ENCODE measurements at regions of chr3 and their contacts with region 1.

Region 1: DNA sequence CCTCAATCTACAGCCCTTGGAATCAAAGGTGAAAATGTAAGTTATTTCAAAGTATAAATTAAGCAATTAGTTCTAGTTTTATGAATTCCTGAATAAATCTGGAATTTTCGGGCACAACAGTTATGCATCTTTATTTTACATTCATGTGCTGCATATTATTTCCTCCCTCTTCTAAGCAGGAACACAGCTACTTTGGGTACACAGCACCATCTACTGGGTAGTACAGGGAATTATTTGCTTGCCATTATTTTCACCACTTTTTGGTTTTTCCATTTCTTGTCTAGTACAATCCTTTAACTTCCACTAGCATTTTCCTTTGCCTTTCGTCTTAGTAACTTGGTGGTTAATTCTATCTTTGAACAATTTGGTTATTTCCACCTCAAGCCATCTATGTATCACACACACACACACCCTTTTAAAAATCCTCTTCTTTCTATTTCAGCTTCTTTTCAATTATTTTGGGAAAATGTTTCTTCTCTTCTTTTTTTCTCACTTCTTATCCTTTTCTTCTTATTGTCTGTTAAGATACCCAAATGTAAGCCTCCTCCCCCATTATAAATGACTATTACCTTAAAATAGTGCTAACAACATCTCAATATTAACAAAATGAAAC is 451.0 kb downstream of the MFSD1 start:
- DNase-seq: peak in 1 of 2 experiments; percentile 22
- H3K4me3 ChIP-seq: no peak overlapping the region
- H3K27ac ChIP-seq: no peak overlapping the region
- H3K4me1 ChIP-seq: no peaks in the 10 kb centered on the region
- H3K27me3 ChIP-seq: no peaks in the 10 kb centered on the region
- CTCF ChIP-seq: peak; percentile 96

Region 2: GRCh38 chr3:158539414-158540014 is 713.4 kb before region 1 on chr3:
- CTCF ChIA-PET with region 1: no interaction called
- POLR2A ChIA-PET with region 1: no interaction called
- intact Hi-C with region 1: loop called (anchors 10 kb)
- DNase-seq: peak in 1 of 2 experiments; percentile 12
- H3K4me3 ChIP-seq: no peak overlapping the region
- H3K27ac ChIP-seq: no peak overlapping the region
- H3K4me1 ChIP-seq: no peaks in the 10 kb centered on the region
- H3K27me3 ChIP-seq: no peaks in the 10 kb centered on the region
- CTCF ChIP-seq: peak; percentile 78

Region 3: GRCh38 chr3:158918008-158918407 is 334.9 kb before region 1 on chr3:
- CTCF ChIA-PET with region 1: interaction called, 6 read pairs
- POLR2A ChIA-PET with region 1: no interaction called
- intact Hi-C with region 1: loop called (anchors 1 kb)
- DNase-seq: peak; percentile 41 to 67
- H3K4me3 ChIP-seq: no peak overlapping the region
- H3K27ac ChIP-seq: no peak overlapping the region
- H3K4me1 ChIP-seq: no peaks in the 10 kb centered on the region
- H3K27me3 ChIP-seq: no peaks in the 10 kb centered on the region
- CTCF ChIP-seq: peak; percentile 82

Region 4: GRCh38 chr3:159130108-159130507 is 122.8 kb before region 1 on chr3:
- CTCF ChIA-PET with region 1: no interaction called
- POLR2A ChIA-PET with region 1: no interaction called
- intact Hi-C with region 1: loop called (anchors 10 kb)
- DNase-seq: no peak
- H3K4me3 ChIP-seq: no peak overlapping the region
- H3K27ac ChIP-seq: no peak overlapping the region
- H3K4me1 ChIP-seq: peaks cover 16% of the 10 kb centered on the region
- H3K27me3 ChIP-seq: no peaks in the 10 kb centered on the region
- CTCF ChIP-seq: peak; percentile 33; the same call in 1 of the 2 replicates

Region 5: DNA sequence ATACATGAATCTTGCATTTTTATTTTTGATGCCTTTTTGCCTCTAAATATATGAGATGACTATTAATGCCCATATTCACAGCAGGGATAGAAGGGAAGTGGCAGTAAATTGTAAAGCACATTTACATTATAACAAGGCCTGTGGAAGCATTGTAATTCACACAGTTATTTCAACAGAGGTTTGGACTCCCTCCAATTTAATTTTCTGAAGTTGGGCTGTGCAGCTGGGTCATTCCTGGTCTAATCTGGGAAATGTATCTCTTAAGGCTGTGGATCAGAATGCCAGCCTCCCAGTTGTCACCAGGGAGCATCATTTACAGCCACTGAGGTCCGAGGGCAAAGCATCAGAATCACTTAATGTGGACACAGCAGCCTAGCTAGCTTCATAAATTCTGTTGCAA is 16.6 kb before region 1 on chr3:
- CTCF ChIA-PET with region 1: no interaction called
- POLR2A ChIA-PET with region 1: no interaction called
- intact Hi-C with region 1: no loop called
- DNase-seq: no peak
- H3K4me3 ChIP-seq: no peak overlapping the region
- H3K27ac ChIP-seq: no peak overlapping the region
- H3K4me1 ChIP-seq: no peaks in the 10 kb centered on the region
- H3K27me3 ChIP-seq: no peaks in the 10 kb centered on the region
- CTCF ChIP-seq: no peak

Region 6: DNA sequence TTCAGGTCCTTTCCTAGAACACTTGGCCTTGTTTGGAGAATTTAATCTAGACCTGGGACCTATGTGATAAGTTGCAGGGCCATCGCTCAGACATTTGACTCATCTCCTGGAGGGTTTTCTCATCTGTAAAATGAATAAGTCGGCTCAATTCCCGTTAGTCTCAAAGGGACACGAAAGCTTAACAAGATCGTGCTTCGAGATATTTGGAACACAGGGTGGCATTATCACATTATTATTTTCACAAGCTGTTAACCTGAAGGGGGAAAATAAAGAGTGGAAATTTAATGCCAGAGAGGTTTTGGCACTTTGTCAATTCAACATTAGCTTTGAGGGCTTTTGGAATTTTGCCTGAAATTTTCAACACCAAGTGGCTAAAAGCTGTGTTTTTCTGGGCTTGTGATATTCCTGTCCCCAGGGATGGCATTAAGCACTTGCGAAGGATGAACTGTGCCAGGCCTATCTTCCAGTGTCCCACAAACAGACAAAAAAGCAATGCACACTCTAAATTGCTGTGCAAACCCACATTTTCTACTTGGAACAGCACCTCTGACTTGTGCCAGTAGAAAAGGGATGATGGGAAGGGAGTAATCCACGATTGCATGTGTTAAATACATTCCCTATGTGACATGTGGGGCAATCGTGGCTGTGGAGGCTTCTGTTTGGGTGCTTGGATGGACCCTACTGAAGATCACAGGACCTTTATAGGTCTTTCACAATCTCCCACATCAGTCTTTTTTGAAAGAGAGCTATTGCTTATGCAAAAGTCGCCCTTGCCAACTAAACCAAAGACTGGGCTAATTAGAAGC is 27.7 kb after region 1 on chr3:
- CTCF ChIA-PET with region 1: no interaction called
- POLR2A ChIA-PET with region 1: no interaction called
- intact Hi-C with region 1: no loop called
- DNase-seq: no peak
- H3K4me3 ChIP-seq: no peak overlapping the region
- H3K27ac ChIP-seq: no peak overlapping the region
- H3K4me1 ChIP-seq: no peaks in the 10 kb centered on the region
- H3K27me3 ChIP-seq: no peaks in the 10 kb centered on the region
- CTCF ChIP-seq: no peak

Region 7: GRCh38 chr3:159432682-159433340 is 179.9 kb after region 1 on chr3:
- CTCF ChIA-PET with region 1: no interaction called
- POLR2A ChIA-PET with region 1: no interaction called
- intact Hi-C with region 1: no loop called
- DNase-seq: no peak
- H3K4me3 ChIP-seq: no peak overlapping the region
- H3K27ac ChIP-seq: no peak overlapping the region
- H3K4me1 ChIP-seq: peaks cover 10% of the 10 kb centered on the region; the same call in 1 of the 2 replicates
- H3K27me3 ChIP-seq: no peaks in the 10 kb centered on the region
- CTCF ChIP-seq: no peak

Region 8: GRCh38 chr3:160027541-160028195 is 774.8 kb after region 1 on chr3:
- CTCF ChIA-PET with region 1: interaction called, 15 read pairs
- POLR2A ChIA-PET with region 1: no interaction called
- intact Hi-C with region 1: no loop called
- DNase-seq: peak; percentile 33 to 56
- H3K4me3 ChIP-seq: no peak overlapping the region
- H3K27ac ChIP-seq: peak overlapping the region; percentile 63
- H3K4me1 ChIP-seq: peaks cover 12% of the 10 kb centered on the region
- H3K27me3 ChIP-seq: no peaks in the 10 kb centered on the region
- CTCF ChIP-seq: no peak